Activated CD4-positive, alpha-beta memory T cell treated with anti-CD3 and anti-CD28 coated beads, Interleukin-2, amount 10 ng/mL, durations not matched to agents 7 days and 5 days (primary cell): ENCODE measurements at regions of chr17 and their contacts with region 1.

Region 1: GRCh38 chr17:5078106-5079028 is at the start of gene ZFP3:
- DNase-seq: peak; percentile 80
- H3K4me3 Mint-ChIP-seq: peak within 1 kb of the TSS; percentile 80
- H3K27ac Mint-ChIP-seq: peak within 1 kb of the TSS; percentile 78
- H3K4me1 Mint-ChIP-seq: peaks cover 24% of the 10 kb centered on the region
- H3K27me3 Mint-ChIP-seq: no peaks in the 10 kb centered on the region
- total RNA-seq, gene ZFP3: 2.9 to 3.4 TPM

Region 2: GRCh38 chr17:4554997-4555799 is 523.2 kb before region 1 on chr17 and contains the start of gene MYBBP1A:
- CTCF ChIA-PET with region 1: no interaction called
- POLR2A ChIA-PET with region 1: no interaction called
- DNase-seq: peak; percentile 97
- H3K4me3 Mint-ChIP-seq: peak within 1 kb of the TSS; percentile 84
- H3K27ac Mint-ChIP-seq: peak within 1 kb of the TSS; percentile 87
- H3K4me1 Mint-ChIP-seq: peaks cover 30% of the 10 kb centered on the region
- H3K27me3 Mint-ChIP-seq: no peaks in the 10 kb centered on the region
- total RNA-seq, gene MYBBP1A: 36.7 to 37.7 TPM

Region 3: DNA sequence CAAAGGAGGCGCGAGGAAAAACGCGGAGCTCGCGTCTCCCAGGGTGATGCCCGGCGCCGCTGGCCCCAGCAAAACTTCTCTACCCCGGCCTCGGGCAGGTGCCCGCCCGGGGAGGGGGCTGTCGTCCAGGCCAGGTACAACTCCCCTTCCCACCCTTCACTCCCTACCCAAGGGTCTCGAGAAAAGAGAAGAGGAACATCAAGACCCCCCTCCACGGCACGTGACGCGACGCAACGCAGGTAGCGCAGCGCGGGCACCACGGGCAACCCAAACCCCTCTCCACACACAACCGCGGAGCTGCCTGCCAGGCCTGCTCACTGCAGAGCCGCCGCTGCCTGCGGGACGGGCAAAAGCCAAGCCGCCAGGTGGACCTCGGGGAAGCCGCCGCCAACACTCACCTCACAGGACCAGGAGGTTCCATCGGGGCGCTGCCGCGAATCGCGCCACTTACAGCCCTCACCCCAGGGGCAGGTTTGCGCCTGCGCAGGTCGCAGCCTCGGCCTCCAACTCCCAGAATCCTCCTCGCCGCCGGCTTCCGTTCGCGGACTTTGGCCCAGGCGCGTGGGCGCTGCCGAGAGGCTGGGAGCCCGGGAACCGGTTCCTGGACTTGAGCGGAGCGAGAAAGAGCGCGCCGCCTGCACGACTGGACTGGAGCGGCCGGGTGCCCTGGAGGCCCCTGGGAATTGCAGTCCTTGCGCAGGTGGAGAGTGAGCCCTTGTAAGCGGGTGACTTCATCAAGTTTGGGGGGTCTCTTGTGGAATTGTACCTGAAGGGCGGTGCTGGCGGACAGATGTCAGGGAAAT is 33.2 kb after region 1 on chr17 and contains the start of gene ZNF232:
- CTCF ChIA-PET with region 1: interaction called, 3 read pairs
- POLR2A ChIA-PET with region 1: interaction called, 10 read pairs
- DNase-seq: peak; percentile 92
- H3K4me3 Mint-ChIP-seq: peak within 1 kb of the TSS; percentile 74
- H3K27ac Mint-ChIP-seq: peak within 1 kb of the TSS; percentile 56
- H3K4me1 Mint-ChIP-seq: peaks cover 21% of the 10 kb centered on the region
- H3K27me3 Mint-ChIP-seq: peaks cover 8% of the 10 kb centered on the region
- total RNA-seq, gene ZNF232: 6.4 to 6.7 TPM

Region 4: GRCh38 chr17:5155495-5155894 is 77.1 kb after region 1 on chr17:
- CTCF ChIA-PET with region 1: no interaction called
- POLR2A ChIA-PET with region 1: no interaction called
- DNase-seq: no peak
- H3K4me3 Mint-ChIP-seq: no peak overlapping the region
- H3K27ac Mint-ChIP-seq: no peak overlapping the region
- H3K4me1 Mint-ChIP-seq: no peaks in the 10 kb centered on the region
- H3K27me3 Mint-ChIP-seq: peaks cover 21% of the 10 kb centered on the region

Region 5: GRCh38 chr17:5191541-5192417 is 113.4 kb after region 1 on chr17 and contains the start of gene ZNF594:
- CTCF ChIA-PET with region 1: interaction called, 7 read pairs
- POLR2A ChIA-PET with region 1: interaction called, 10 read pairs
- DNase-seq: peak; percentile 97
- H3K4me3 Mint-ChIP-seq: peak within 1 kb of the TSS; percentile 93
- H3K27ac Mint-ChIP-seq: peak within 1 kb of the TSS; percentile 87
- H3K4me1 Mint-ChIP-seq: peaks cover 33% of the 10 kb centered on the region
- H3K27me3 Mint-ChIP-seq: no peaks in the 10 kb centered on the region
- total RNA-seq, gene ZNF594: 7.0 to 8.6 TPM